Left cardiac atrium (tissue), 4 donors: ENCODE measurements at regions of chr12 and their contacts with region 1.

Region 1: DNA sequence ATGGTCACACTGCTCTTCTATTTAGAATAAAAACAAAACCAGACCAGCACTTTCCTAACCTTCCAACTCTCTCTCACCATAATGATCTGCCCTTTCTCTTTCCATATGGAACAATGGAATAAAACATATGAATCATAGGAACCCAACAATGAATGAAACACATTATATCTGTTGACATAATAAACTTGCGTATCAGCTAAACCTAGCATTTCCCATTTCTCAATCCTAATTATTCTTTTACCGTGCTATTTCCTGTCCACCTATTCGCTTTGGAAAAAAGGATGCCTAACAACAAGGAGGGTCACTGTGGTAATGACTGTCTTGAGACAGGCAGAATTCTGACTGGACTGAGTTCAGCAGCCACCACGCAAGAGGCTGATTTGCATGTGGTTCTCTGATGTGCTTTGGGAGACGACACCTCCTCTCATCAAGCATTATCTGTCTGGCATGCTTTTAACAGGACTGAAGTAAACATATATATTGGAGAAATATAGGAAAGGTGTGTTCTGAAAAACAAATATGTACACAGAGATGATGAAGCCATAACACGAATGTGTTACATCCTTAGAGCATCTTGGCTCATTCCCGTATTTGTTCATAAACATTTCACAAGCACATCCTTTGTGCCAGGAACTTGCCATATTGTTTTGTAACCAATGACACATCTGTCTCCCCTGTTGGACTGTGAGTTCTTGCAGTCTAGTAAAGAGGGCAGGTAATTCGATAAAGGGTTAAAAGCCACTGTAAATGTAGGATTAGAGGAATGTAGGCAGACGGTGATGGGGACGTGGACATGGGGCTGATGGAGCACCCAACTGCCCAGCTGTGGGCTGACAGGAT is 87.7 kb downstream of the PTPRB start:
- DNase-seq: no peak
- ATAC-seq: no peak

Region 2: DNA sequence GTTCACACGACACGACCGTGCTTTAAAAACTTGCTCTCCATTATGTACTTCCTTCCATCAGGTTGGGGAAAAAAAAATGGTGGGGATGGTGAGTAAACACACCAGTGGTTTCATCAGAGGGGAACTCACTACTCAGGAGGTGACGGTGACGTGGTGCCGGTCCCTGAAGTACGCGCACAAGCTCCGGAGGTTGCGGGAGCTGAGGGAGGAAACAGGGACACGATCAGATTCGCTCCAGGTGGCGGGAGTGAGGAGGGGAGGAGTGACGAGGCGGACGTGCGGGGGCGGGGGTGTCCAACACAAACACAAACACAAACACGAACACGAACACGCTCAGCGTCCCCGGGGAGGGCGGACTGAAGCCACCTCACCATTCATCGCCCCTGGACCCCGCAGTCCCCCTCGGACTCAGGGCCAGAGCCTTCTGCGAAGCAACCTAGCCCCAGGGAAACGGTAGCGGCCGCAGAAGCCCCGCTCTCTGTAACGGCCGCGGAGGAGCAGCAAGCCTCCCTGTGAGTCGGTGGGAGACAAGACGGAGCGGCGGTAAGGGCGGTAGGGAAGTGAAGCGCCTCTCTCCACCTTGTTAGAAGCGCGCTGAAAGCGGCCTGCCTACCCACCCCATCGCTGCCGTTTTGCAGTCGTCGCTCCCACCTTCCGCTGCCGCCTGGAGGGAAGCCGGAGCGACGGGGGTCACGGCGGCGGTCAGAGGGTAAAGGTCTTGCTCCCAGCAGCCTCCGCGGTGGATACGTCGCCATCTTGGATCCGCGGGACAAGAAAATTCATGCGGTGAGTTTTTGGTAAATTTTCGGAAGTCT is 306.7 kb before region 1 on chr12 and contains the start of gene CNOT2:
- intact Hi-C with region 1: loop called in 1 of 2 experiments (anchors 10 kb)
- DNase-seq: peak; percentile 93
- ATAC-seq: peak; percentile 97 to 98
- total RNA-seq, gene CNOT2: 36.0 to 44.8 TPM

Region 3: GRCh38 chr12:70774055-70774454 is 224.5 kb after region 1 on chr12:
- intact Hi-C with region 1: no loop called
- DNase-seq: no peak
- ATAC-seq: no peak